Heart left ventricle (tissue), 16 donors: ENCODE measurements at regions of chr4 and their contacts with region 1.

Region 1: DNA sequence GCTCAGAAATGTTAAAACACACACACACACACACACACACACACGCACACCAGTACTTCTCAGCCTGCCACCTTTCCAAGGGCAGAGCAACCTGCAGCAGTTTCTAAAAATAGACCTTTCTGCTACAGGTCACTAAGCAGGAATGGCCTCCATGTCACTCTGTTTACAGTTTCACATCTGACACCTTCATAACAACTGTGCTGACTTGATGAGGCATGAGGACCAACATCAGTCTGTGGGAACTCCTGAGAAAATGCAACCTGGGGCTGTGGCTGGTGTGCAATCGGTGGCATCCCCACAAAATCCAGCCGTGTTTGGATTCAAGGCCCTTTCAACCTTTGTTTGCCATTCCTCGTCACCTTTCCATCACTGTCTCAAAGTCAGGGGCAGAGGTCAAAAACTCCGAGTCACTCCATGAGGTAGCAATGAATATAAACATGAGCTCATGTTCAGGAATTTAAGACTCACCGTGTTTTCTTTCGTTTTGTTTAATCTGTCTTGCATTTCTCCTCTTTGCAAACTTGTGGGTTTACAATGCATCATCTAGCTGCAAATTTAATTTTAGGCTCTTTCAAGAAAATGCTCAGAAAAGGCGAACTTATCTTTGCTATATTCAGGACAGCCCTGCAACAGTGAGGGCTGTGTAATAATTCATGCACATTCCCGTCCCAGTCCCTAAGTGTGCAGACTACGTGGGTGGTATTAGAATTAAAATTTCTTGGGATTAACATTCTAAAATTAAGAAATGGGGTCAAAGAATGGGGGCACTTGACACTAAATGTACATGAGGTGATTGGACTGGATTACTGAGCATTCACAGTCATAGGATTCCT is 135.3 kb downstream of the SHROOM3 start:
- DNase-seq: no peak
- ATAC-seq: peak in 2 of 4 donors; percentile 52 to 72
- H3K4me3 ChIP-seq: no peak overlapping the region
- H3K27ac ChIP-seq: no peak overlapping the region
- H3K4me1 ChIP-seq: peaks cover 0 to 19% (median 0%) of the 10 kb centered on the region in 12 donors
- H3K27me3 ChIP-seq: no peaks in the 10 kb centered on the region
- CTCF ChIP-seq: no peak
- POLR2A ChIP-seq: no peak

Region 2: DNA sequence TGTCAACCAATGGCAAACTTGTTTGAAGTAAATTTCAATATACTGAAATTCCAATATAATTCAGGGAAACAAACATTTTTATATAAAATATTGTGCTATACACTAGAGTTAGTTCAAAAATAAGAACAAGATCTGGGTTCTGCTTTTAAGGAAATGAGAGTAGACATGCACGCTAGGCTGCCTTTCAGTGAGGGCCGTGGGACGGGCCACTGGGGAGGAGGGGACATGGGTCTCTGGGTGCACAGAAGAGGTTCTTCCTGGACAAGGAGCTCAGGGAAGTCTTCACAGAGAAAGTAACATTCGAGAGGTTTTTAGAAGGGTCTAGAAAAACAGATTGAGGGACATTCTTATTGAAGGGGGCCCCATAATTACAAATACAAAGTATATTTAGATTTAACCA is 70.9 kb before region 1 on chr4:
- intact Hi-C with region 1: no loop called
- DNase-seq: no peak
- ATAC-seq: no peak
- H3K4me3 ChIP-seq: no peak overlapping the region
- H3K27ac ChIP-seq: no peak overlapping the region
- H3K4me1 ChIP-seq: peaks cover 0 to 8% (median 0%) of the 10 kb centered on the region in 12 donors
- H3K27me3 ChIP-seq: no peaks in the 10 kb centered on the region
- CTCF ChIP-seq: no peak
- POLR2A ChIP-seq: no peak

Region 3: DNA sequence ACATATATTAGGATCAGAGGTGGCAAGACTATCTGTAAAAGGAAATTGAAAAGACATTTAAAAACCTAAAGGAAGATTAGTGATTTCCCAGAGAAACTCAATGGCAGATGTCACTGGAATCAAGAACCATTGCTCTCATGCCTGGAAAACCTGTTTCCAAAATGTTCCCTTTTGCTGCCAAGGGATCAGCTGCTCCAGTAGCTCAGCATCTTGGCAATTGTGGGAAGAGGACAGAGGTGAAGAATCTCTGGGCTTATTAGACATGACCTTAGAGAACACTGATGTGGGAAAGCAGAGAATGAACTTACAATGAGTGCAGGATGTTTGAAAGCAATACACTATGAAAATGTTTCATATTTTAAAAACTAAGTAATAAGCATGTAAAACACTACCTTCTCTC is 37.0 kb before region 1 on chr4:
- intact Hi-C with region 1: loop called in 1 of 10 experiments (anchors 5 kb)
- DNase-seq: no peak
- ATAC-seq: peak in 1 of 4 donors; percentile 50
- H3K4me3 ChIP-seq: no peak overlapping the region
- H3K27ac ChIP-seq: peak overlapping the region in 2 of 12 donors; percentile 1 to 21
- H3K4me1 ChIP-seq: peaks cover 0 to 18% (median under 1%) of the 10 kb centered on the region in 12 donors
- H3K27me3 ChIP-seq: no peaks in the 10 kb centered on the region
- CTCF ChIP-seq: no peak
- POLR2A ChIP-seq: no peak

Region 4: GRCh38 chr4:76607266-76607799 is 37.0 kb after region 1 on chr4:
- intact Hi-C with region 1: no loop called
- DNase-seq: no peak
- ATAC-seq: no peak
- H3K4me3 ChIP-seq: no peak overlapping the region
- H3K27ac ChIP-seq: peak overlapping the region in 3 of 12 donors; percentile 11 to 41 (median 15)
- H3K4me1 ChIP-seq: peaks cover 0 to 54% (median 17%) of the 10 kb centered on the region in 12 donors
- H3K27me3 ChIP-seq: no peaks in the 10 kb centered on the region
- CTCF ChIP-seq: no peak
- POLR2A ChIP-seq: no peak